Motor neuron (in vitro differentiated cells): ENCODE measurements at regions of chr2 and their contacts with region 1.

Region 1: GRCh38 chr2:44479122-44479887 is 117.6 kb downstream of the CAMKMT start:
- ATAC-seq: peak; percentile 90 to 98 (median 96)
- H3K4me3 ChIP-seq: no peak overlapping the region
- H3K27ac ChIP-seq: no peak overlapping the region
- H3K4me1 ChIP-seq: no peaks in the 10 kb centered on the region

Region 2: GRCh38 chr2:43927442-43927841 is 551.9 kb before region 1 on chr2:
- in situ Hi-C with region 1: no loop called
- ATAC-seq: no peak
- H3K4me3 ChIP-seq: no peak overlapping the region
- H3K27ac ChIP-seq: no peak overlapping the region
- H3K4me1 ChIP-seq: no peaks in the 10 kb centered on the region

Region 3: GRCh38 chr2:44372246-44372645 is 107.1 kb before region 1 on chr2:
- in situ Hi-C with region 1: no loop called
- ATAC-seq: no peak
- H3K4me3 ChIP-seq: no peak overlapping the region
- H3K27ac ChIP-seq: no peak overlapping the region
- H3K4me1 ChIP-seq: no peaks in the 10 kb centered on the region

Region 4: DNA sequence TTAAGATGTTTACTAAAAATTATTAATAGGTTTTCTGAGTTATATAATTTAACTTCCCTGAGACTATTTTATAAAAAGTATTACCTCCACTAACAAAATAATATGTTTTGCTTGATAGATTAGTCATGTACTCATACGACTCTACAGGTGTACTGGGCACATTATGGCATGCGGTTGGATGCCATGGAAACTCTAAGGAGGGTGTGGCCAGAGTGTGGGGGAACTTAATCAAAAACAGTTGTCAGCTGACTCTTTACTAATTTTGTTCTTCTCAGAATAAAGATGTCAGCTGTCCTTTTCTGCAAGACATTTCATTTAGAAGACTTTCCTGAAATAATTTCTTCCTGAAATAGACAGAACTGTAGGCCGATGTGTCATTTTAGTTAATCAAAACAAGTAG is 233.9 kb after region 1 on chr2:
- in situ Hi-C with region 1: loop called in 1 of 9 experiments (anchors 5 kb)
- ATAC-seq: no peak
- H3K4me3 ChIP-seq: no peak overlapping the region
- H3K27ac ChIP-seq: no peak overlapping the region
- H3K4me1 ChIP-seq: peaks cover 6 to 7% of the 10 kb centered on the region in 2 donors

Region 5: DNA sequence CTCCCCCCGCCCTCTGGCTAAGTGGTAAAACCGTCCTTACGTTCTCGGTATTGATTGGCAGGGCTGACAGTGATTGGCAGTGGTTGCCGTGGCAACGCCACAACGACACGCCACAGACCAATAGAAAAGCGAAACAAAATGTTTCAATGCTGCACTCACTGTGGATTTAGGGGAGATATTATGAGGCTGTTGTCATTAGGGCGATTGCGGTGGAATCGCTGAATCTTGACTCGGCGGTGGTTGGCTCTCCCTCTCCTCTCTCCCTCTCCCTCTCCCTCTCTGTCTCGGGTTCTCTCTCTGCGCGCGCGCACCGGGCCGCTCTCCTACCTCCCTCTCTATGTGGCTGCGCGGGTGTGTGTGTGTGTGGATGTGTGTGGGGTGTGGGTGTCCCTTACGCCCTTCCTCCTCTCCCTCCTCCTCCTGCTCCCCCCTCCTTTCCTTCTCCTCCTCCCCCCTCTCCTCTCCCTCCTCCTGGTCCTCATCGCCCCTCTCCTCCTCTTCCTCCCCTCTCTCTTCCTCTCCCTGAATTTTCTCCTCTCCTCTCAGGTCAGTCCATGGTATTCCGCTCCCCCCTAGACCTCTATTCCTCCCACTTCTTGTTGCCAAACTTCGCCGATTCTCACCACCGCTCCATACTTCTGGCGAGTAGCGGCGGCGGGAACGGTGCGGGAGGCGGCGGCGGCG is 462.4 kb after region 1 on chr2 and contains the start of gene SIX3:
- in situ Hi-C with region 1: loop called in 1 of 9 experiments (anchors 25 kb)
- ATAC-seq: peak; percentile 60 to 81 (median 72)
- H3K4me3 ChIP-seq: peak within 1 kb of the TSS in 4 of 5 donors; percentile 20 to 32 (median 26)
- H3K27ac ChIP-seq: no peak within 1 kb of the TSS
- H3K4me1 ChIP-seq: peaks cover 6 to 25% of the 10 kb centered on the region in 2 donors
- total RNA-seq, gene SIX3: 0.08 to 0.47 (median 0.22) TPM in 4 of 8 experiments, not detected in the others